ENCODE measurements at regions of chr7 and their contacts with region 1.

Region 1: DNA sequence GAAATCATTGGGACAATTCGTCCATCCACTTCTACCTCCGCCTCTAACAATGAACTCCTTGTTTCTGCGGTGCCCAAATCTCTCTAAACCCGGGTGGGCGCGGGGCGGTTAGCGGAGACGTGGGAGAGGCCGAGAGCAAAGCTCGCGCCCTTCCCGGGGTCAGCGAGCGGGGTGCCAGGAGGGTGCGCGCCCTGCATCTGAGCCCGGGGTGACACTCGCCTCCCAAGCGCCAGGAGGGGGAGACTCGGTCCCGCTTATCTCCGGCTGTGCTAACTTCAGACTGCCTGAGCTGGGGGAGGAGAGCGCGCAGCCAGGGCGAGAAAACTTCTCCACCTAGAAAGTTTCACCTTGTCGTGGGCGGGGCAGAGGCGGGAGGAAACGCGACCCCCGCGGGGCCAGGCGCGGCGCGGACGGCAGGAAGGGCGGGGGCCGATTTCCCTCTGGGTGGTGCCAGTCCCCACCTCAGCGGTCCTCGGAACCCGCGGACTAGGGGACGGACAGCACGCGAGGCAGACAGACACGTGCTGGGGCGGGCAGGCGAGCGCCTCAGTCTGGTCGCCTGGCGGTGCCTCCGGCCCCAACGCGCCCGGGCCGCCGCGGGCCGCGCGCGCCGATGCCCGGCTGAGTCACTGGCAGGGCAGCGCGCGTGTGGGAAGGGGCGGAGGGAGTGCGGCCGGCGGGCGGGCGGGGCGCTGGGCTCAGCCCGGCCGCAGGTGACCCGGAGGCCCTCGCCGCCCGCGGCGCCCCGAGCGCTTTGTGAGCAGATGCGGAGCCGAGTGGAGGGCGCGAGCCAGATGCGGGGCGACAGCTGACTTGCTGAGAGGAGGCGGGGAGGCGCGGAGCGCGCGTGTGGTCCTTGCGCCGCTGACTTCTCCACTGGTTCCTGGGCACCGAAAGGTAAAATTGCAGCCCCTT is at the start of gene MET:
- DNase-seq: peak; percentile 95
- H3K4me3 ChIP-seq: peak within 1 kb of the TSS; percentile 92 to 98 (median 94)
- H3K27ac ChIP-seq: peak within 1 kb of the TSS; percentile 98
- H3K4me1 ChIP-seq: peaks cover 32% of the 10 kb centered on the region
- H3K27me3 ChIP-seq: no peaks in the 10 kb centered on the region
- CTCF ChIP-seq: peak; percentile 32 to 81
- total RNA-seq, gene MET: 112 to 179 TPM

Region 2: DNA sequence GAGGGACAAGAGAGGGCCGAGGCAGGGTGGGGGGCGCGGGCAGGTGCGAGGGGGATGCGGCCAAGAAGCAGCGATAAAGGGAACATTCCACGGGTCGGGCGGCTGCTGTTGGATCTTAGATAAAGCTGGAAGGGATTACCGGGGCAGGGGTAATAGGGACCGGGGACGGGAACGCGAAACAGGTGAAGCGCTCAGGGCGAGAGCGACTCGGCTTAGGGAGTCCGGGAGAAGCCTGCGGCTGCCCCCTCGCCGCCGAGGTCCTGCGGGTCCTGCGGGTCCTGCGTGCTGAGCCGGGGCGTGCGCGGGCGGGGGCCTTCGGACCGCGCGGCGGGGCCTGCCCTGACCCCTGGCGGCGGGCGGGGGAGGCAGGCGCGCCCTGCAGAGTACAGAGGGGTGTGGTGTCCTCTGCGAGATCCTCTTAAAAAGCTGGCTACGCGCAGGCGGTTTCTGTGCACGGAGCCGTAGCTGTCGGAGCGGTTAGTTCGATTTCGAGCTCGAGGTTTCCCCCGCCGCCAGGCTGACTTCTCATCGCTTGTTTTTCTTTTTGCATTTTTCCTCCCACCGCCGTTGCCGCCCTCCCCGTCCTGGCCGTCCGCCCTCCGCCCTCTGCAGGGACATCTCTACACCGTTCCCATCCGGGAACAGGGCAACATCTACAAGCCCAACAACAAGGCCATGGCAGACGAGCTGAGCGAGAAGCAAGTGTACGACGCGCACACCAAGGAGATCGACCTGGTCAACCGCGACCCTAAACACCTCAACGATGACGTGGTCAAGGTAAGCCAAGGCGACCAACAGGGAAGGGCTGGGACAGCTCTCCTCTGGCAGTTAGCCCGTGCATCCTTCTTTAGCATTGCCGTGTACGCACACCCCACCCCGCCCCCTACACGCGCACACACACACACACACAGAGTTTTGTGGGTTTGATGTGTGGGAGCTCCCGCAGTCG is 145.8 kb before region 1 on chr7:
- CTCF ChIA-PET with region 1: no interaction called
- dilution Hi-C with region 1: no loop called
- in situ Hi-C with region 1: no loop called
- intact Hi-C with region 1: loop called (anchors 10 kb)
- DNase-seq: peak; percentile 77
- H3K4me3 ChIP-seq: peak overlapping the region; percentile 72 to 78 (median 76)
- H3K27ac ChIP-seq: peak overlapping the region; percentile 96
- H3K4me1 ChIP-seq: peaks cover 62% of the 10 kb centered on the region
- H3K27me3 ChIP-seq: no peaks in the 10 kb centered on the region
- CTCF ChIP-seq: peak; percentile 47 to 62

Region 3: GRCh38 chr7:116630932-116631745 is 40.8 kb before region 1 on chr7:
- CTCF ChIA-PET with region 1: no interaction called
- dilution Hi-C with region 1: no loop called
- in situ Hi-C with region 1: no loop called
- intact Hi-C with region 1: loop called (anchors 1 kb)
- DNase-seq: peak; percentile 100
- H3K4me3 ChIP-seq: no peak overlapping the region
- H3K27ac ChIP-seq: peak overlapping the region; percentile 95
- H3K4me1 ChIP-seq: peaks cover 56% of the 10 kb centered on the region
- H3K27me3 ChIP-seq: no peaks in the 10 kb centered on the region
- CTCF ChIP-seq: no peak

Region 4: DNA sequence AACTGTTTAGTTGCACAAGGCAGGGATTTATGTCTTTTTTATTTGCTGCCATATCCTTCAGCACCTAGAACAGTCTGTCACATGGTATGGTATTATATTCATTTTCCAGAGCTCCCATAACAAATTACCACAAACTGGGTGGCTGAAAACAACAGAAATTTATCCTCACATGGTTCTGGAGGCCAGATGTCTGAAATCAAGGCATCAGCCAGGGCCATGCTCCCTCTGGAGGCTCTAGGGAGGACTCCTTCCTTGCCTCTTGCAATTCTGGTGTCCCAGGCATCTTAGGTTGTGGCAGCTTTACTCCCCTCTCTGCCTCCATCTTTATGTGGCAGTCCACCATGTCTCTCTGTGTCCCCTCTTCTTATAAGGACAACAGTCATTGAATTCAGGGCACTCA is 43.1 kb after region 1 on chr7:
- CTCF ChIA-PET with region 1: no interaction called
- dilution Hi-C with region 1: no loop called
- in situ Hi-C with region 1: no loop called
- intact Hi-C with region 1: loop called (anchors 1 kb)
- DNase-seq: no peak
- H3K4me3 ChIP-seq: no peak overlapping the region
- H3K27ac ChIP-seq: no peak overlapping the region
- H3K4me1 ChIP-seq: peaks cover 27% of the 10 kb centered on the region
- H3K27me3 ChIP-seq: no peaks in the 10 kb centered on the region
- CTCF ChIP-seq: peak in 1 of 2 donors; percentile 21

Region 5: DNA sequence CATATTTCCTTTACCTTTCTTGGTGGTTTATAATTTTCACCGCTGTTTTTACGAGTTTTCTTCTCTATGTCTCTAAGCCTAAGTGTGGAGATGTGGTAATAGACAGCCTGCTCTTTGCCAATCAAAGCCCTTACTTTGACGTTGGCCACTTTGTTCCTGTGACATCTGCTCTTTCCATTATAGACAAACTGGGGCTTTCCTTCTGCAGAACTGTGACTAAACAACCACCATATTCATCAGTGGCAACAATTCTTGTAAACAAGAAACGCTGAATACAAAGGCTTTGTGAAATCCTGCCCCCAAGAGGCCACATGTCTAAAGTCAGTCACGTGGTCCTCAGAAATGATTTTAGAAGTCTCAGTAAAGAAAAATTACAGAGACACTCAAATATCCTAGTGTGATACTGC is 130.8 kb after region 1 on chr7:
- CTCF ChIA-PET with region 1: no interaction called
- dilution Hi-C with region 1: no loop called
- in situ Hi-C with region 1: loop called in 1 of 2 experiments (anchors 10 kb)
- intact Hi-C with region 1: loop called (anchors 1 kb)
- DNase-seq: peak; percentile 80
- H3K4me3 ChIP-seq: no peak overlapping the region
- H3K27ac ChIP-seq: peak overlapping the region; percentile 89
- H3K4me1 ChIP-seq: peaks cover 31% of the 10 kb centered on the region
- H3K27me3 ChIP-seq: no peaks in the 10 kb centered on the region
- CTCF ChIP-seq: peak; percentile 57 to 65

Region 6: DNA sequence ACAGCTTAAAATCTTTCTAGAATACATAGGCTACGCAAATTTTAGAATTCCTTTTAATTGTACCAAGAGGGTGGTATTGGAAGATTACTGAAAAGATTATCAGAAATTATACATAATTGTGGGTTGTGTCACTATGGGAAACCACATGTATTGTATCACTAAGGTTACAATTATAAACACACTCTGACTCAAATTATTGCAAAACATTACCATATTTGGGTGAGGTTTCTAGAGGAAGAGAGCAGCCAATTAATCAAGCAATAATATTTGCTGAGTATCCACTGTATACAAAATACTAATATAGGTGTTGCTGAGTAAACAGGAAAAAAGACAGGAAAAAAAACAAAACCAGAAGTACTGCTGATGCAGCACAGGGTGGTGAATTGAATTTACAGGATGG is 187.4 kb after region 1 on chr7:
- CTCF ChIA-PET with region 1: interaction called, 4 read pairs
- dilution Hi-C with region 1: no loop called
- in situ Hi-C with region 1: no loop called
- intact Hi-C with region 1: loop called (anchors 5 kb)
- DNase-seq: peak; percentile 80
- H3K4me3 ChIP-seq: no peak overlapping the region
- H3K27ac ChIP-seq: peak overlapping the region; percentile 61
- H3K4me1 ChIP-seq: peaks cover 7% of the 10 kb centered on the region
- H3K27me3 ChIP-seq: no peaks in the 10 kb centered on the region
- CTCF ChIP-seq: no peak

Measured in mammary epithelial cell (primary cell).